ENCODE measurements at regions of chr2 and their contacts with region 1.

Region 1: GRCh38 chr2:150610671-150611279 is 123.3 kb upstream of the RND3 start:
- DNase-seq: no peak
- ATAC-seq: no peak

Region 2: GRCh38 chr2:150425121-150425955 is 185.4 kb before region 1 on chr2:
- intact Hi-C with region 1: loop called (anchors 1 kb)
- DNase-seq: peak; percentile 68
- ATAC-seq: peak; percentile 90

Region 3: DNA sequence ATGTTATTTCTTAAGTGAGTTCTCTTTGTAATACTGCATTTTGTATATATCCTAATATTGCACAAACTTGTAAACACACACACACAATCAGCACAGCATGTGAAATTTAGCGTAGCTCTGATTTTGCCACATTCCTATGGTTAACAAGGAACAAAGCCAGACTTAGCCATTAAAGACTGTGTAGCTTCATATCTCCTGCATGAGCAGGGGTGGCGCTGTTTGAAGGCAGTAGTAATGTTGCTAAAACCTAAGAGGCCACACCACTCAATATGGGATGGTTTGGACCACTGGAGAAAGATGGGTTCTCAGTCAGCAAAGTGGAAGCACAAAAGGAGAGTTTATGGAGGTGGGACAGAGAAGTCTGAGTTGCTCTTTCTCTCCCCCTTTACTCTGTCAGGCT is 62.2 kb before region 1 on chr2:
- intact Hi-C with region 1: no loop called
- DNase-seq: no peak
- ATAC-seq: no peak

Region 4: GRCh38 chr2:151051574-151052220 is 440.9 kb after region 1 on chr2:
- intact Hi-C with region 1: loop called (anchors 10 kb)
- DNase-seq: no peak
- ATAC-seq: peak; percentile 34